Activated naive CD4-positive, alpha-beta T cell treated with anti-CD3 and anti-CD28 coated beads, Interleukin-2, amount 10 ng/mL, durations not matched to agents 7 days and 5 days (primary cell): ENCODE measurements at regions of chr1 and their contacts with region 1.

Region 1: GRCh38 chr1:100866041-100866900 is 28.4 kb downstream of the EXTL2 start:
- DNase-seq: no peak
- H3K4me3 Mint-ChIP-seq: no peak overlapping the region
- H3K27ac Mint-ChIP-seq: no peak overlapping the region
- H3K4me1 Mint-ChIP-seq: no peaks in the 10 kb centered on the region
- H3K27me3 Mint-ChIP-seq: no peaks in the 10 kb centered on the region

Region 2: DNA sequence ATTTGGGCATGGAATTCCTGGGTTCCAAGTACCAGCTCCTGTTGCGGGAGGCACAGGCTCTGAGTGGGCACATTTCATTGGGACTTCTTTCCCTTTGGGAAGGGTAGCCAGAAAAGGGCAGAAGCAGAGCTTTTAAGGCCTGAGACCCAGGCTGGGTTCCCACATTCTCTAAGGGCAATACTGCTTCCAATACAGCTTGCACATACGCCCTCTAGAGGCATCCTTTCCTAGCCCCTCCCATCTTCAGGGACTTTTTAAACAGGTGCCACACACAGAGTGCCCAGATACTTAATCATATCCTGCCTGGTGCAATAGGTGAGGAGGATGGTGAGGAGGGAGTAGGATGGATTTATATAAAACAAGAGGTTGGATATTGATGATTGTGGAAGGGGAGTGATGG is 322.6 kb before region 1 on chr1:
- CTCF ChIA-PET with region 1: interaction called, 18 read pairs
- DNase-seq: peak; percentile 58
- H3K4me3 Mint-ChIP-seq: no peak overlapping the region
- H3K27ac Mint-ChIP-seq: no peak overlapping the region
- H3K4me1 Mint-ChIP-seq: peaks cover 11% of the 10 kb centered on the region
- H3K27me3 Mint-ChIP-seq: peaks cover 39% of the 10 kb centered on the region

Region 3: DNA sequence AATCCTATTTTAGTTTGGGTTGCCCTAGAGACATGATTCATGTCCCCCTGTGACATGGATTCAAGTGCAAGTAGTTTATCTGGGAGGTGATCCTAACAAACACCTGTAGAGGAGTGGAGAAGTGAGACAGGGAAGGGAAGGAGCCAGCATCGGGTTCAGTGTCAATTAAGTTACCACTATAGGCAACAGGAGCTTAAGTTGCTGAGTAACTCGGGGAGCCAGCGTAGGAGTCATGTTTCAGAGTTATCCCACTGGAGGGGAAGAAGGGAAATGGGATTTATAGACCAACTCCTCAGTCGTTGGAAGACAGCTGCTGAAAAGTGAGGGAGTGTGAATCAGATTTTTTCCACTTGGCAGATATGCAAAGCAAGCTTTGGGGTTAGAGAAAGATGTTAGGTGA is 84.5 kb after region 1 on chr1:
- CTCF ChIA-PET with region 1: no interaction called
- DNase-seq: no peak
- H3K4me3 Mint-ChIP-seq: no peak overlapping the region
- H3K27ac Mint-ChIP-seq: peak overlapping the region; percentile 96
- H3K4me1 Mint-ChIP-seq: peaks cover 66% of the 10 kb centered on the region
- H3K27me3 Mint-ChIP-seq: no peaks in the 10 kb centered on the region

Region 4: DNA sequence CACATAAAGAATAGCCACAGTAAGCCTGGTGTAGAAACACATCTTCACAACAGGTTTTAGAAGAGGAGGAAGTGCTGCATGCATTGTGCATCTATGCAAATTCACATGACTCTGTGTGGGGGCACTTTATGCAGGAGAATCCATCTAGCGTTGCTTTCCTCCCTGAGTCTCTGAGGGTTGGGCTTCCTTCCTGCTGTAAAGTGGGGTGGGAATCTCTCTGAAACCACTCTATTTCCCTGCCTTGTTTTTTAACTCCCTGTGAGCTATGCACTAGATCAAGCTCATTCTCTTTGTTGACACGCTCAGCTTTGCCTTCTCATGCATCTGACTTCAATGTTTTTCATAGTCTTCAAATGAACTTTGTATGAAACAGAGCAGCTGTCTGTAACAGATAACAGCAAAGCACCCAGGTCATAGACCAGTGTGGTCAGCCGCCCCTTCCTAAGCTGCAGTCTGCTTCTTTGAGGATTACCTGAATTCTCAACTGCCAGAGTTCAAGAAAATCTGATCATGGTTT is 262.0 kb after region 1 on chr1:
- CTCF ChIA-PET with region 1: no interaction called
- DNase-seq: peak; percentile 51
- H3K4me3 Mint-ChIP-seq: peak overlapping the region; percentile 50
- H3K27ac Mint-ChIP-seq: peak overlapping the region; percentile 84
- H3K4me1 Mint-ChIP-seq: peaks cover 81% of the 10 kb centered on the region
- H3K27me3 Mint-ChIP-seq: no peaks in the 10 kb centered on the region